ENCODE measurements at regions of chr14 and their contacts with region 1.

Region 1: GRCh38 chr14:74979442-74980361 is 23.0 kb upstream of the EIF2B2 start:
- DNase-seq: peak in 1 of 2 experiments; percentile 66
- H3K4me3 ChIP-seq: no peak overlapping the region
- H3K27ac ChIP-seq: no peak overlapping the region
- H3K4me1 ChIP-seq: peaks cover 0 to 28% (median 23%) of the 10 kb centered on the region in 4 experiments; a peak in 6 of 7 replicates
- H3K27me3 ChIP-seq: peaks cover 0 to 2% (median 1%) of the 10 kb centered on the region in 4 experiments; a peak in 1 of 7 replicates
- CTCF ChIP-seq: peak in 2 of 3 experiments; percentile 5 to 44; a peak in 1 of 4 replicates
- EP300 ChIP-seq: no peak
- POLR2A ChIP-seq: no peak
- RAD21 ChIP-seq: peak in 1 of 2 experiments; percentile 21; a peak in 1 of 4 replicates

Region 2: GRCh38 chr14:74963705-74964271 is 15.9 kb before region 1 on chr14:
- CTCF ChIA-PET with region 1: interaction called, 12 read pairs
- POLR2A ChIA-PET with region 1: interaction called, 3 read pairs
- DNase-seq: no peak
- H3K4me3 ChIP-seq: no peak overlapping the region
- H3K27ac ChIP-seq: no peak overlapping the region
- H3K4me1 ChIP-seq: peaks cover 0 to 6% (median 0%) of the 10 kb centered on the region in 4 experiments; a peak in 3 of 7 replicates
- H3K27me3 ChIP-seq: no peaks in the 10 kb centered on the region
- CTCF ChIP-seq: no peak
- EP300 ChIP-seq: no peak
- POLR2A ChIP-seq: no peak
- RAD21 ChIP-seq: no peak

Measured in H1 (cell line).